Prostate gland (tissue), 2 donors: ENCODE measurements at regions of chr1 and their contacts with region 1.

Region 1: DNA sequence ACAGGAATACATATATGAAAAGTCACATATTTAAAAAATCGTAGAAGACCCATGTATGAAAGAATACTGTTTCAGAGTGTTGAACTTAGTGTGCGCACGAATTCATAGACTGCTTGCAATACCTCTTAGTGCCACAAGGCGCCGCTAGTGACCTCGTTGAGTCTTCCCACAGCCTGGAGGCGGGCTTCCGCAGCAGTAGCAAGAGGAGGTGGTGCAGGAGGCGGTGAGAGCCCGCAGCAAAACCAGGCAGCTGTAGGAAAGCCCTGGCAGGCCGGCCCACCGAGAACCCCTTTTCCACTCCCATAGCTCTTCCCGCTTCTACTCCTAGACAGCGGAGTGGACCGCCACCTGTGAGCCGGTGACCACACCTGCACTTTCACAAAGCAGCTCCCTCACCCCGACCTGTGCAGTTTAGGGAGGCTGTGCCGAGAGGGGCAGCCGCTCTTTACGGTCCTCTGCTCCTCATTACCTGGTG is 23.5 kb downstream of the MTARC1 start:
- DNase-seq: peak; percentile 54
- H3K4me3 ChIP-seq: no peak overlapping the region
- H3K27ac ChIP-seq: no peak overlapping the region
- H3K4me1 ChIP-seq: no peaks in the 10 kb centered on the region
- H3K27me3 ChIP-seq: no peaks in the 10 kb centered on the region
- CTCF ChIP-seq: peak; percentile 71 to 84 (median 75)
- POLR2A ChIP-seq: no peak

Region 2: GRCh38 chr1:220908757-220909156 is 98.5 kb after region 1 on chr1:
- intact Hi-C with region 1: no loop called
- DNase-seq: no peak
- H3K4me3 ChIP-seq: no peak overlapping the region
- H3K27ac ChIP-seq: no peak overlapping the region
- H3K4me1 ChIP-seq: no peaks in the 10 kb centered on the region
- H3K27me3 ChIP-seq: no peaks in the 10 kb centered on the region
- CTCF ChIP-seq: peak in 1 of 4 experiments; percentile 33
- POLR2A ChIP-seq: no peak

Region 3: GRCh38 chr1:221203224-221204054 is 393.2 kb after region 1 on chr1:
- intact Hi-C with region 1: loop called (anchors 10 kb)
- DNase-seq: peak; percentile 33
- H3K4me3 ChIP-seq: no peak overlapping the region
- H3K27ac ChIP-seq: no peak overlapping the region
- H3K4me1 ChIP-seq: no peaks in the 10 kb centered on the region
- H3K27me3 ChIP-seq: peaks cover 4% of the 10 kb centered on the region
- CTCF ChIP-seq: peak; percentile 20 to 65 (median 53)
- POLR2A ChIP-seq: no peak